Ascending aorta (tissue), 2 donors: ENCODE measurements at regions of chr11 and their contacts with region 1.

Region 1: DNA sequence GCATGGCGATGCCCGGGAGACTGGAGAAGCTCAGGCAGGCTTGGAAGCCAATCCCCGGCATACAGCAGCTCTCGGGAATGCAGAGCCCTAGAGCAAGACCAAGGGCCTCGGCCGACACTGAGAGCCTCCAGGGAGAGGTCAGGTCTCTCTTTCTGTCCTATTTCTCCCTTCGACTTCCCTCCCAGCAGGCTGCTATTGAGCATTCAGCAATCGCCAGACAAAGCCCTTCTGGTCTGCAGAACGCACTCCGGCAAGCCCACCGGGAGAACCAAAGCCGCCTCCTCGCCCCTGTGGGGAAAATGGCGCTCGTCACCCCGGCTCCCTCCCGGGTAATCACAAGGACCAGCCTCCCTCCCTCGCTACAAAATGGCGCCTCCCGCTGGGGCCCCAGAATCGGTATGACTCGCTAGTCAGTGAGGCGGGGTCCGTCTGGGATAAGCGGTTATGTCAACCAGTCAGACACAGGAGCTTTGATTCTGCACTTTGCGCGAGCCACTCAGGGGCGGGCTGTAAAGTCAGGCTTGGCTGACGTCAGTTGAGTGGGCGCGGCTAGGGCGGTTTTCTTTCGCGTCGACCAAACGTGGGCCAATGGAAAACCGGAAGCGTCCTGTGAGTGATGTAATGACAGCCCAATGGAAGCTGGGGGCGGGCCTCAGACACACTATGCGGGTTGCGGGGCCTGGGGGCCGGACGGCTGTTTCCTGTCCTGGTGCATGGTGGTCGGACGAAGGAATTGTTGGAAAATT is at the start of gene ZNF143:
- DNase-seq: peak; percentile 99 to 100
- H3K4me3 ChIP-seq: peak within 1 kb of the TSS; percentile 83 to 98
- H3K27ac ChIP-seq: peak within 1 kb of the TSS; percentile 98 to 100
- H3K4me1 ChIP-seq: peaks cover 5 to 20% of the 10 kb centered on the region in 2 donors
- H3K27me3 ChIP-seq: no peaks in the 10 kb centered on the region
- CTCF ChIP-seq: peak in 1 of 3 experiments; percentile 21
- total RNA-seq, gene ZNF143: 2.7 TPM

Region 2: GRCh38 chr11:9265211-9266131 is 195.0 kb before region 1 on chr11 and contains the start of gene DENND5A:
- intact Hi-C with region 1: loop called (anchors 5 kb)
- DNase-seq: peak; percentile 39 to 91
- H3K4me3 ChIP-seq: peak within 1 kb of the TSS; percentile 85 to 91
- H3K27ac ChIP-seq: peak within 1 kb of the TSS; percentile 96 to 97
- H3K4me1 ChIP-seq: peaks cover 0 to 14% of the 10 kb centered on the region in 2 donors
- H3K27me3 ChIP-seq: no peaks in the 10 kb centered on the region
- CTCF ChIP-seq: no peak
- total RNA-seq, gene DENND5A: 111 TPM

Region 3: DNA sequence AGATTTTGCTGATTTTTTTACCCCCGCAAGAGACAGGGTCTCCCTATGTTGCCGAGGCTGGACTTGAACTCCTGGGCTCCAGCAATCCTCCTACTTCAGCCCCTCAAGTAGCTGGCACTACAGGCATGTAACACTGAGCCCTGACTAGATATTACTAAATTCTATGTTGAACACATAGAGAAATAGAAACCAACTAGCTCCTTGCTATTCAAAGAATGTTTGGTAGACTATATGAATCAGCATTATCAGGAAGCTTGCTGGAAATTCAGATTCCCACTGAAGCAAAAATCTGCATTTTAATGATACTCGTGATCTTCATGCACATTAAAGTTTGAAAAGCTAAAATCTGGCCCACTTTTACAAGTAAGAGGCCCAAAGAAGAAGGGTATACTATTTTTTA is 158.0 kb before region 1 on chr11:
- intact Hi-C with region 1: no loop called
- DNase-seq: no peak
- H3K4me3 ChIP-seq: no peak overlapping the region
- H3K27ac ChIP-seq: no peak overlapping the region
- H3K4me1 ChIP-seq: no peaks in the 10 kb centered on the region
- H3K27me3 ChIP-seq: no peaks in the 10 kb centered on the region
- CTCF ChIP-seq: no peak

Region 4: GRCh38 chr11:9314291-9315036 is 146.0 kb before region 1 on chr11 and contains the start of gene TMEM41B:
- intact Hi-C with region 1: loop called (anchors 1 kb)
- DNase-seq: peak; percentile 94 to 99
- H3K4me3 ChIP-seq: peak within 1 kb of the TSS; percentile 59 to 73
- H3K27ac ChIP-seq: peak within 1 kb of the TSS; percentile 77 to 88
- H3K4me1 ChIP-seq: peaks cover 0 to 9% of the 10 kb centered on the region in 2 donors
- H3K27me3 ChIP-seq: no peaks in the 10 kb centered on the region
- CTCF ChIP-seq: peak in 2 of 3 experiments; percentile 2 to 8
- total RNA-seq, gene TMEM41B: 26.7 TPM

Region 5: GRCh38 chr11:9384535-9385303 is 75.8 kb before region 1 on chr11 and contains the start of gene IPO7:
- intact Hi-C with region 1: loop called (anchors 2 kb)
- DNase-seq: peak; percentile 70 to 95
- H3K4me3 ChIP-seq: peak within 1 kb of the TSS; percentile 86 to 97
- H3K27ac ChIP-seq: peak within 1 kb of the TSS; percentile 94 to 99
- H3K4me1 ChIP-seq: peaks cover 0 to 36% of the 10 kb centered on the region in 2 donors
- H3K27me3 ChIP-seq: no peaks in the 10 kb centered on the region
- CTCF ChIP-seq: peak; percentile 8 to 41 (median 38)
- total RNA-seq, gene IPO7: 93.4 TPM

Region 6: DNA sequence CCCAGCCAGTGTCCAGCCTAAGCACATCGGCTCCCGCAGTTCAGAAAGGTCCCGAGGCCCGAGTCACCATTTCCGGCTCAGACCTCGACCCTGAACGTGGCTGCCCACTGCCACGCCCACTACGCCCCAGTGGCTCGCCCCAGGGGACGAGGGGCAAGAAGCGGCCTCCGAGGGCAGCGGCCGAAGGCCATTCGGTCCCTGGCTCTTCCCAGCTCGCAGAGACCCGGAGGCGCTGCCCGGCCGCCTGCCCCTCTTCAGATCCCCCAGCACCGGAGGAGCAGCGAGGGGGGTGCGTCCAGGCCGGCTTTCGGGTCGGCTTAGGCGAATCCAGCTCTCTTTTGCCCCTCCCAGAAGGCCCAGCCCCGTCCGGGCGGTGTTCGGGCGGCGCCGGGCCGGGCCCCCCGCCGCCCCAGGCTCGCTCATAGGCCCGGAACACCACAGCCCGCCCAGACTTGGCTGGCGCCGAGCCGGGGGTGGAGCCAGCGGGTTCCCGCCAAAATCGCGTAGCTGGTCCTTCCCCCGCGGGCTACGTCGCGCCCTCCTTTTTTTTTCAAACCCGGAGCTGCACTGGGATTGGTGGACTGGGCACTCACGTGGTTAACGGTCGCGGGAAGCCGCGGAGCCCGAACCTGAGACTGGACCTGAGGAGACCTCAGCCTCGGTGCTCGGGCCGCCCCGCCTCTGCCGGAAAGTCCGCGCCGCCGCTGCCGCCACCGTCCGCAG is 112.7 kb after region 1 on chr11 and contains the start of gene WEE1:
- intact Hi-C with region 1: loop called (anchors 2 kb)
- DNase-seq: peak; percentile 95 to 99
- H3K4me3 ChIP-seq: peak within 1 kb of the TSS; percentile 89 to 98
- H3K27ac ChIP-seq: peak within 1 kb of the TSS; percentile 93 to 98
- H3K4me1 ChIP-seq: peaks cover 16 to 27% of the 10 kb centered on the region in 2 donors
- H3K27me3 ChIP-seq: no peaks in the 10 kb centered on the region
- CTCF ChIP-seq: no peak
- total RNA-seq, gene WEE1: 20.8 TPM